WTC11 (cell line): ENCODE measurements at regions of chr16 and their contacts with region 1.

Region 1: DNA sequence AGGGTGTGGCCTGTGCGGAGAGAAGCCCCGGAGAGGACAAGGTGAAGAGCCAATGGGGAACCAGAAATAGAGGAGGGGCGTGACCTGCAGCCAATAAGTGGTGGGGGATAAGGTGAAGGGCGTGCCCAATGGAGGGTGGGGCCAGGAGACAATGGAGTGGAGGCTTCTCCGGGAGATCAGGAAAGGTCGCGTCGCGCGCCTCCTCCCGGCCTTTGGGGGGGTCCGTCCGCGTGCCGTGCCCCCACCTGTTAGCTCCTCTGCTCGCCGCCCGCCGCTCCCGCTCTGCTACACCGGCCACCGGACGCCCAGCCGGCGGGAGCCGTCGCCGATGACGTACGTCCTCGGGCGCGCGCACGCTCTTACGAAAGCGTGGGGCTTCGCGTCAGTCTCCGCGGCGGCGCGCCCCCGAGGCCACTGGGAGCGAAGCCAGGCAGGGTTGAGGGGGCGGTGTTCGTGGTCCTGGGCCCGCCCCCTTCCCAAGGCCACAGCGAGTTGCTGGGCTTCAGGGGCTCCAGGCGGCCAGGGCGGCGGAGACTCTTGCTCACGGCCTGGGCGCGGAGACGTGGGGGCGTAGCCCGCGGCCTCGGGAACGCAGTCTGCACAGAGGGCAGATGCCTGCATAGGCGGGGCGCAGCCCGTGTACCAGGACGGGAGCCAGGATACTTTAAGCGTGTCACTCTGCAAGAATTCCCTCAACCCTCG is at the start of gene MATCAP1:
- DNase-seq: peak; percentile 94
- ATAC-seq: peak; percentile 90
- H3K4me3 Mint-ChIP-seq: peak within 1 kb of the TSS; percentile 82
- H3K27ac Mint-ChIP-seq: no peak within 1 kb of the TSS
- H3K4me1 Mint-ChIP-seq: peaks cover 20% of the 10 kb centered on the region
- H3K27me3 Mint-ChIP-seq: peaks cover 31% of the 10 kb centered on the region
- CTCF ChIP-seq: no peak
- total RNA-seq, gene MATCAP1: 40.8 to 54.3 TPM (median 50.5 TPM) in 3 replicates

Region 2: DNA sequence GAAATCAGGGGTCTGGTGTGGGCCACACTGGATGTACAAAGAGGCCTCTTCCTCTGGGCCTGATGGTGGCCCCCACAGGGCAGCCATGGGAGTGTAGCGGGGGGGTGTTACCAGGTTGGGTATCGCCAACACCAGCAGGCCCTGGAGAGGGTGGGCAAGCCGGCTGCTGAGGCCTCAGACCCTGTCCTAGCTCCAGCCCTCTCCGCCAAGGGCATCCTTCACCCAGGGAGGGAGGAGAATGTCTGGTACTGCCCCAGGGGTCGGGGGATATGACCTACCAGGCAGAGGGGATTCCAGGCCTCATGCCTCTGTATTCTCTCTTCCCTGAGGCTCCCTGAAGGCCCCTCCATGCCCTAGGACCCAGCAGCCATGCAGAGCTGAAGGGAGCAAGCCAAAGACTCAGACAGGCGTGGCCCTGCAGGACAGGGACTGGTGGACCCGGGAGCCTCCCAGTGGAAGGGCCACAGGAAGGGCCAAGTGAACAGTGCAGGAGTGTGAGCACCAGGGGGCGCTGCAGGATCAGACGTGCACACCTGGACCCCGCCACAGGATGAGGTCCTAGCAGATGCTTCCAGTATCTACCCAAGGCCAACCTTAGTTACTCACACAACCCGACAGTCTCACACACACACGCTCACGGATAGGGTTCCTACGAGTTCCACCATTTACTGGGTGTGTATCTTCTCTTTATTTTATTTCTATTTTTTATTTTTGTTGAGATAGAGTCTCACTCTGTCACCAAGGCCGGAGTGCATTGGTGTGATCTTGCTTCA is 206.3 kb before region 1 on chr16:
- CTCF ChIA-PET with region 1: interaction called, 10 read pairs
- POLR2A ChIA-PET with region 1: no interaction called
- DNase-seq: peak; percentile 95
- ATAC-seq: peak; percentile 95
- H3K4me3 Mint-ChIP-seq: no peak overlapping the region
- H3K27ac Mint-ChIP-seq: no peak overlapping the region
- H3K4me1 Mint-ChIP-seq: peaks cover 6% of the 10 kb centered on the region
- H3K27me3 Mint-ChIP-seq: no peaks in the 10 kb centered on the region; the same call in 1 of the 2 replicates
- CTCF ChIP-seq: peak; percentile 96

Region 3: GRCh38 chr16:67071476-67072048 is 112.2 kb before region 1 on chr16:
- CTCF ChIA-PET with region 1: no interaction called
- POLR2A ChIA-PET with region 1: no interaction called
- DNase-seq: no peak
- ATAC-seq: no peak
- H3K4me3 Mint-ChIP-seq: no peak overlapping the region
- H3K27ac Mint-ChIP-seq: peak overlapping the region; percentile 68; the same call in 1 of the 2 replicates
- H3K4me1 Mint-ChIP-seq: no peaks in the 10 kb centered on the region
- H3K27me3 Mint-ChIP-seq: no peaks in the 10 kb centered on the region
- CTCF ChIP-seq: no peak

Region 4: GRCh38 chr16:67150833-67151396 is 32.9 kb before region 1 on chr16 and contains the start of gene B3GNT9:
- CTCF ChIA-PET with region 1: interaction called, 49 read pairs
- POLR2A ChIA-PET with region 1: interaction called, 3 read pairs
- DNase-seq: peak; percentile 77
- ATAC-seq: peak; percentile 36
- H3K4me3 Mint-ChIP-seq: peak within 1 kb of the TSS; percentile 75
- H3K27ac Mint-ChIP-seq: no peak within 1 kb of the TSS
- H3K4me1 Mint-ChIP-seq: peaks cover 8% of the 10 kb centered on the region
- H3K27me3 Mint-ChIP-seq: peaks cover 58% of the 10 kb centered on the region
- CTCF ChIP-seq: no peak
- total RNA-seq, gene B3GNT9: 6.4 to 7.8 TPM (median 7.6 TPM) in 3 replicates

Region 5: DNA sequence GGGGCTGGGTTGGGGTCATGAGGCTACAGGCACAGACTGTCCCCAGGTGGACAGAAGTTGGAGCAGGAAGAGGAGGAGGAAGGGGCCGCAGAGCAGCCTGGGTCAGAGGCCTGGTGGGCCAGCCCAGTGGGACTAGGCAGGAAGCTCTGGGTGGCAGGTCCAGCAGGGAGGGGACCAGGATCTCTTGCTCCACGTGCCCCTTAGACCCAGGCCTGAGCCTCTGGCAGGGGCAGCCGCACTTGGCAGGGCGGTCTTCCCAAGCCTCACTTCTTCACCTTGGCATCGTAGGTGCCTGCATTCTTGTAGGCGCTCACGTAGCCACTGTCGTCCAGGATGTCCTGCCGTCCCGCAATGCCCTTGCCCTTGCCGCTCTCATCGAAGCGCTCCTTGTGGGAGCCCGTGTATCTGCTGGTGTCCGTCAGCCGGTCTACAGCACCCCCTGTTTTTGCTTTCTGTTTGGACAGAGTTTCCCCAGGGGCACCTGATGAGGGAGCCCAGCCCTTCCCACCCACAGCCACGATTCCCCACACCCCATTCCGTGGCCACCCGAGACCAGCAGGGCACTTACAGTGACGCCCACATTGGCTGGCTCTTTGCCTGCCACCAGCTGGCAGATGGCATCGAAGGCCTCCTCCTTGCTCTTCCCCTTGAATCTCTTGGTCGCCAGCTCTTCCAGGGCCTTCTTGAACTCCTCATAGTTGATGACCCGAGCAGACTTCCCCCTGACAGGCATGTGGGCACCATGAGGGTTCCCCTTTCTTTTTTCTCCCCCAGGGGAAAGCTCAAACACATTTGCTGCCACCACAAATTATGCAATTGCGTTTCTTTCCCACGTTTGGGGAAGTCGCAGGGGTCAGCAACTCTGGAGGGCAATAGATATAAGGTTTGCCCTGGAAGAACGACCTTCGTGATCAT is 206.4 kb after region 1 on chr16:
- CTCF ChIA-PET with region 1: no interaction called
- POLR2A ChIA-PET with region 1: no interaction called
- DNase-seq: no peak
- ATAC-seq: no peak
- H3K4me3 Mint-ChIP-seq: no peak overlapping the region
- H3K27ac Mint-ChIP-seq: peak overlapping the region; percentile 84; the same call in 1 of the 2 replicates
- H3K4me1 Mint-ChIP-seq: peaks cover 19% of the 10 kb centered on the region
- H3K27me3 Mint-ChIP-seq: peaks cover 52% of the 10 kb centered on the region
- CTCF ChIP-seq: no peak